B cell (primary cell): ENCODE measurements at regions of chr6 and their contacts with region 1.

Region 1: GRCh38 chr6:137415127-137415833 is 78.9 kb downstream of the OLIG3 start:
- DNase-seq: peak; percentile 81
- ATAC-seq: peak; percentile 97
- H3K4me3 ChIP-seq: peak overlapping the region; percentile 39 to 77 (median 63)
- H3K4me3 Mint-ChIP-seq: peak overlapping the region; percentile 89
- H3K27ac ChIP-seq: peak overlapping the region; percentile 14 to 65
- H3K27ac Mint-ChIP-seq: peak overlapping the region; percentile 43
- H3K4me1 ChIP-seq: peaks cover 8 to 9% of the 10 kb centered on the region in 2 donors
- H3K4me1 Mint-ChIP-seq: peaks cover 10% of the 10 kb centered on the region
- H3K27me3 ChIP-seq: peaks cover 0 to 9% (median 3%) of the 10 kb centered on the region in 4 experiments
- H3K27me3 Mint-ChIP-seq: peaks cover 7% of the 10 kb centered on the region
- CTCF ChIP-seq: peak; percentile 79

Region 2: GRCh38 chr6:137271245-137272183 is 143.8 kb before region 1 on chr6:
- CTCF ChIA-PET with region 1: interaction called, 25 read pairs
- POLR2A ChIA-PET with region 1: no interaction called
- intact Hi-C with region 1: loop called (anchors 1 kb)
- DNase-seq: peak; percentile 63
- ATAC-seq: peak; percentile 72
- H3K4me3 ChIP-seq: no peak overlapping the region
- H3K4me3 Mint-ChIP-seq: no peak overlapping the region
- H3K27ac ChIP-seq: no peak overlapping the region
- H3K27ac Mint-ChIP-seq: no peak overlapping the region
- H3K4me1 ChIP-seq: peaks cover 5 to 14% of the 10 kb centered on the region in 2 donors
- H3K4me1 Mint-ChIP-seq: peaks cover 15% of the 10 kb centered on the region
- H3K27me3 ChIP-seq: no peaks in the 10 kb centered on the region
- H3K27me3 Mint-ChIP-seq: no peaks in the 10 kb centered on the region
- CTCF ChIP-seq: peak; percentile 93

Region 3: GRCh38 chr6:137341681-137342195 is 73.5 kb before region 1 on chr6:
- CTCF ChIA-PET with region 1: interaction called, 83 read pairs
- POLR2A ChIA-PET with region 1: no interaction called
- intact Hi-C with region 1: loop called (anchors 1 kb)
- DNase-seq: peak; percentile 44
- ATAC-seq: no peak
- H3K4me3 ChIP-seq: peak overlapping the region in 1 of 5 experiments; percentile 62
- H3K4me3 Mint-ChIP-seq: peak overlapping the region; percentile 64
- H3K27ac ChIP-seq: no peak overlapping the region
- H3K27ac Mint-ChIP-seq: no peak overlapping the region
- H3K4me1 ChIP-seq: peaks cover 7 to 9% of the 10 kb centered on the region in 2 donors
- H3K4me1 Mint-ChIP-seq: peaks cover 15% of the 10 kb centered on the region
- H3K27me3 ChIP-seq: no peaks in the 10 kb centered on the region
- H3K27me3 Mint-ChIP-seq: peaks cover 12% of the 10 kb centered on the region
- CTCF ChIP-seq: peak; percentile 19

Region 4: GRCh38 chr6:137432054-137432611 is 16.9 kb after region 1 on chr6:
- CTCF ChIA-PET with region 1: interaction called, 12 read pairs
- POLR2A ChIA-PET with region 1: no interaction called
- intact Hi-C with region 1: loop called (anchors 2 kb)
- DNase-seq: peak; percentile 64
- ATAC-seq: peak; percentile 67
- H3K4me3 ChIP-seq: peak overlapping the region in 1 of 5 experiments; percentile 42
- H3K4me3 Mint-ChIP-seq: peak overlapping the region; percentile 78
- H3K27ac ChIP-seq: no peak overlapping the region
- H3K27ac Mint-ChIP-seq: peak overlapping the region; percentile 2
- H3K4me1 ChIP-seq: peaks cover 34 to 35% of the 10 kb centered on the region in 2 donors
- H3K4me1 Mint-ChIP-seq: peaks cover 34% of the 10 kb centered on the region
- H3K27me3 ChIP-seq: no peaks in the 10 kb centered on the region
- H3K27me3 Mint-ChIP-seq: no peaks in the 10 kb centered on the region
- CTCF ChIP-seq: no peak